Endothelial cell of umbilical vein (primary cell): ENCODE measurements at regions of chr1 and their contacts with region 1.

Region 1: GRCh38 chr1:1374929-1375662 is at the start of gene AURKAIP1:
- DNase-seq: peak; percentile 100
- H3K4me3 ChIP-seq: peak within 1 kb of the TSS; percentile 81 to 88 (median 84)
- H3K27ac ChIP-seq: peak within 1 kb of the TSS; percentile 71
- H3K4me1 ChIP-seq: peaks cover 13% of the 10 kb centered on the region
- H3K27me3 ChIP-seq: no peaks in the 10 kb centered on the region
- CTCF ChIP-seq: peak; percentile 24 to 45
- POLR2A ChIP-seq: peak; percentile 53
- total RNA-seq, gene AURKAIP1: 149 and 151 TPM in 2 replicates

Region 2: GRCh38 chr1:921011-921837 is 453.9 kb before region 1 on chr1:
- CTCF ChIA-PET with region 1: no interaction called
- POLR2A ChIA-PET with region 1: no interaction called
- dilution Hi-C with region 1: no loop called
- intact Hi-C with region 1: no loop called
- DNase-seq: peak; percentile 56
- H3K4me3 ChIP-seq: no peak overlapping the region
- H3K27ac ChIP-seq: no peak overlapping the region
- H3K4me1 ChIP-seq: no peaks in the 10 kb centered on the region
- H3K27me3 ChIP-seq: peaks cover 15 to 22% of the 10 kb centered on the region in 2 experiments
- CTCF ChIP-seq: peak; percentile 20 to 58
- POLR2A ChIP-seq: no peak

Region 3: GRCh38 chr1:1281533-1282321 is 93.4 kb before region 1 on chr1:
- CTCF ChIA-PET with region 1: no interaction called
- POLR2A ChIA-PET with region 1: no interaction called
- dilution Hi-C with region 1: no loop called
- intact Hi-C with region 1: no loop called
- DNase-seq: peak; percentile 21
- H3K4me3 ChIP-seq: no peak overlapping the region
- H3K27ac ChIP-seq: no peak overlapping the region
- H3K4me1 ChIP-seq: peaks cover 2% of the 10 kb centered on the region
- H3K27me3 ChIP-seq: no peaks in the 10 kb centered on the region
- CTCF ChIP-seq: no peak
- POLR2A ChIP-seq: no peak

Region 4: DNA sequence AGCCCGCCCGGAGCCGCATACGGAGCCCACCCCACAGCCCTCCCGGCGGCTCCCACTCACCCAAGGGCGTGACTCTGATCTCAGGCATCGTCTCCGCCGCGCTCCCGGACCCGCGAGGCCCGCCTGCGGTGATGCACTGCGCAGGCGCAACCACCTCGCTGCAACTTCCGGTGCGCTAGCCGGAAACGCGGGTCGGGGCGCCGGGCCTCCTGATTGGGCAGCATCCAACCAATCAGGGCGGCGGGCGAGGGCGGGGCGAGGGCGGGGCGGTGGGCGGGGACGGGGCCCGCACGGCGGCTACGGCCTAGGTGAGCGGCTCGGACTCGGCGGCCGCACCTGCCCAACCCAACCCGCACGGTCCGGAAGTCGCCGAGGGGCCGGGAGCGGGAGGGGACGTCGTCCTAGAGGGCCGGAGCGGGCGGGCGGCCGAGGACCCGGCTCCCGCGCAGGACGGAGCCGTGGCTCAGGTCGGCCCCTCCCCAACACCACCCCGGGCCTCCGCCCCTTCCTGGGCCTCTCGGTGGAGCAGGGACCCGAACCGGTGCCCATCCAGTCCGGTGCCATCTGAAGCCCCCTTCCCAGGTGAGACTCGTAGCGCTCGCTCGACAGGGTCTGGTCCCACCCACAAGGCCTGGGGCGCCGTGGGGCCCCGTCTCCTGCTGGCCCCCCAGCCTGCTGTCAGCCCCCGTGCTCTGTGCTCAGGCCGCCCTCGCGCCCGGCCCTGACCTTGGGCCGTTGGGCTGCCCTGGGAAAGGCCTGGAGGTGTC is 50.4 kb before region 1 on chr1 and contains the starts of genes CPTP and INTS11:
- CTCF ChIA-PET with region 1: no interaction called
- POLR2A ChIA-PET with region 1: no interaction called
- dilution Hi-C with region 1: no loop called
- intact Hi-C with region 1: loop called (anchors 2 kb)
- DNase-seq: peak; percentile 89
- H3K4me3 ChIP-seq: peak within 1 kb of the TSS; percentile 71 to 97 (median 84)
- H3K27ac ChIP-seq: peak within 1 kb of the TSS; percentile 61
- H3K4me1 ChIP-seq: peaks cover 13% of the 10 kb centered on the region
- H3K27me3 ChIP-seq: no peaks in the 10 kb centered on the region
- CTCF ChIP-seq: no peak
- POLR2A ChIP-seq: peak; percentile 81
- total RNA-seq, gene CPTP: 25.1 and 29.5 TPM in 2 replicates
- total RNA-seq, gene INTS11: 127 and 132 TPM in 2 replicates

Region 5: DNA sequence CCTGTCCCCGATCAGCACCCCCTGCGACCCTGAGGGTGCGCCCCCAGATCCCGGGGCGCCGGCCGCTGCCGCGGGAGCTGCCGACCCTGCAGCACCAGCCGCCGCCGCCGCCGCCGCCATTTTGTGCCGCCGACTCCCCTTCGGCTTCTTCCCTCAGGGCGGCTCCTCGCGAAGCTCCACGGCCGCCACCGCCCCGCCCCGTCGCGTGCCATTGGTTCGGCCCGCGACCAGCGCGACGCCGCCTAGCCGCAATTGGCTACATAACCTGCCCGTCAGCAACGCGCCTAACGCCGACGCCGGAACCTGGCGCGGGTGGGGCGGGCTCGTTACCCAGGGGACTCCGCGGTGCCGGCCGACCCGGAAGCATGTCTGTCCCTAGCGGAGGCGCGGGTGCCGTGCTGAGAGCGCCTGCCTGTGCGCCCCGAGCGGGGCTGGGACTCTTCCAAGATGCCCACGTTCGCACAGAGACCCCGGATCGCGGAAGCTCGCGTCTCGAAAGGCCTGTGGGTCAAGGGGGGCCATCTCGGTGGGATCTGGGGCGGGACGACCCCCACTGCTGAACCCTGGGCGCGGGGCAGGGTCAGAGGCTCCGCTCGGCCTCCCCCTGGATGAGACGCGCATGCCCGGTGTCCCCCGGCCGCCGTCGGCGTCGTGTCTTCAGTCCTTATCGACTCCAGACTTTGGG is 24.2 kb after region 1 on chr1 and contains the start of gene CCNL2:
- CTCF ChIA-PET with region 1: interaction called, 8 read pairs
- POLR2A ChIA-PET with region 1: interaction called, 6 read pairs
- dilution Hi-C with region 1: no loop called
- intact Hi-C with region 1: loop called (anchors 1 kb)
- DNase-seq: peak; percentile 99
- H3K4me3 ChIP-seq: peak within 1 kb of the TSS; percentile 80 to 92 (median 90)
- H3K27ac ChIP-seq: peak within 1 kb of the TSS; percentile 54
- H3K4me1 ChIP-seq: peaks cover 22% of the 10 kb centered on the region
- H3K27me3 ChIP-seq: no peaks in the 10 kb centered on the region
- CTCF ChIP-seq: peak; percentile 63 to 78
- POLR2A ChIP-seq: peak; percentile 58
- total RNA-seq, gene CCNL2: 182 and 188 TPM in 2 replicates

Region 6: GRCh38 chr1:1441002-1441888 is 66.1 kb after region 1 on chr1:
- CTCF ChIA-PET with region 1: interaction called, 9 read pairs
- POLR2A ChIA-PET with region 1: no interaction called
- dilution Hi-C with region 1: no loop called
- intact Hi-C with region 1: loop called (anchors 2 kb)
- DNase-seq: peak; percentile 37
- H3K4me3 ChIP-seq: no peak overlapping the region
- H3K27ac ChIP-seq: no peak overlapping the region
- H3K4me1 ChIP-seq: no peaks in the 10 kb centered on the region
- H3K27me3 ChIP-seq: no peaks in the 10 kb centered on the region
- CTCF ChIP-seq: peak; percentile 86 to 99
- POLR2A ChIP-seq: no peak

Region 7: GRCh38 chr1:1462318-1462966 is 87.3 kb after region 1 on chr1:
- CTCF ChIA-PET with region 1: no interaction called
- POLR2A ChIA-PET with region 1: no interaction called
- dilution Hi-C with region 1: no loop called
- intact Hi-C with region 1: no loop called
- DNase-seq: no peak
- H3K4me3 ChIP-seq: no peak overlapping the region
- H3K27ac ChIP-seq: no peak overlapping the region
- H3K4me1 ChIP-seq: no peaks in the 10 kb centered on the region
- H3K27me3 ChIP-seq: no peaks in the 10 kb centered on the region
- CTCF ChIP-seq: no peak
- POLR2A ChIP-seq: no peak